Activated T-helper 2 cell treated with anti-CD3 and anti-CD28 coated beads, Interferon-gamma antibody, Interleukin-2, Interleukin-4, amounts not matched to agents 10 μg/mL and 5 μg/mL and 100 μg/mL, durations not matched to agents 14 hours and 24 hours and 36 hours (primary cell): ENCODE measurements at regions of chr11 and their contacts with region 1.

Region 1: DNA sequence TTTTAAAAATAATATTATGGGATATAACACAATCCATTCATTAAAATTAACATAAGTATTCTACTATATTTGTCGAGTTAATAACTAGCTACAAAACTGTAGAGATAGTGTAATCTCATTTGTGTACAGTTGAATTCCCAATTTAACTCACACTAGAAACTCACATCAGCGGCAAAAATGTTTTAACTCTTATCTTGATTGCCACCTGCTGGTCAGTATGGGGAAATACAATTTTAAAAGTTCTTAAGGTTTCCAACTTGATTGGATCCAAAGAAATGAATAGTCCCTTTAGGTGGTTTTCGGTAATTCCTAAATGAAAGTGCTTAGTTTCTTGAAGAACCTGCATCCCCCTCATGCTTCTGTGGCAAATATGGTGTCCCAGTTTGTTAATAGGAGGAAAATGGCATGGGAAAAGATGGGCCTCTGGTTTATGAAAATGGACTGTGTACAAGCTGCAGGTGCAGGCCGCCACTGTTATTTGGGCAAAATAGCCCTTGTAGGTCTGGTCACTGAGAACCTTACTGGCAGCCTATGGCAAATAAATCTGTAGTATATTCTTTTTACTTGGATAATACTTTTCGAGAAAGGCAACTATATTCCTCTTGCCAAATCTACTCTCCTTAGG is 33.7 kb upstream of the SLC17A6 start:
- DNase-seq: no peak
- H3K4me3 Mint-ChIP-seq: no peak overlapping the region
- H3K27ac Mint-ChIP-seq: no peak overlapping the region
- H3K4me1 Mint-ChIP-seq: no peaks in the 10 kb centered on the region
- H3K27me3 Mint-ChIP-seq: peaks cover 2% of the 10 kb centered on the region

Region 2: GRCh38 chr11:20647976-20648565 is 1656.4 kb before region 1 on chr11:
- intact Hi-C with region 1: loop called (anchors 5 kb)
- DNase-seq: no peak
- H3K4me3 Mint-ChIP-seq: no peak overlapping the region
- H3K27ac Mint-ChIP-seq: no peak overlapping the region
- H3K4me1 Mint-ChIP-seq: no peaks in the 10 kb centered on the region
- H3K27me3 Mint-ChIP-seq: no peaks in the 10 kb centered on the region

Region 3: GRCh38 chr11:22203281-22203680 is 101.2 kb before region 1 on chr11:
- intact Hi-C with region 1: no loop called
- DNase-seq: no peak
- H3K4me3 Mint-ChIP-seq: no peak overlapping the region
- H3K27ac Mint-ChIP-seq: no peak overlapping the region
- H3K4me1 Mint-ChIP-seq: no peaks in the 10 kb centered on the region
- H3K27me3 Mint-ChIP-seq: no peaks in the 10 kb centered on the region

Region 4: GRCh38 chr11:22244986-22245592 is 59.4 kb before region 1 on chr11:
- intact Hi-C with region 1: loop called (anchors 1 kb)
- DNase-seq: no peak
- H3K4me3 Mint-ChIP-seq: no peak overlapping the region
- H3K27ac Mint-ChIP-seq: no peak overlapping the region
- H3K4me1 Mint-ChIP-seq: no peaks in the 10 kb centered on the region
- H3K27me3 Mint-ChIP-seq: peaks cover 5% of the 10 kb centered on the region

Region 5: DNA sequence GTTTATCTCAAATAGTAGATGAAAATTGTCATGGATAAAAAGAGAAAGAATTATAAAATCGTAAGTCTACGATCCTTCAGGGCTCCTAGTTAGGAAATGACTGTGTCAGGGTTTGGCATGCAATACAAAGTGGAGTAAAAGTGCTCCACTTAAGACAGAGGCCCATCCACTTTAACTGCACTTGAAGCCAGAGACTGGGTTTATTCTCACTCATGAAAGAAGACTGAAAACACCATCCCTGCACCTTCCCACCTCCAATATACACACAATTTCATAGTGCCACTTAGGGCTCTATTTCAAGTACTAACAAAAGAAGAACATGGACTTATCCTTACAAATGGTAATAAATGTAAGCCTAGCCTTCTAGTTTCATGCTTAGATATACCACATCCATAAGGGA is 40.8 kb before region 1 on chr11:
- intact Hi-C with region 1: no loop called
- DNase-seq: no peak
- H3K4me3 Mint-ChIP-seq: no peak overlapping the region
- H3K27ac Mint-ChIP-seq: no peak overlapping the region
- H3K4me1 Mint-ChIP-seq: no peaks in the 10 kb centered on the region
- H3K27me3 Mint-ChIP-seq: no peaks in the 10 kb centered on the region

Region 6: DNA sequence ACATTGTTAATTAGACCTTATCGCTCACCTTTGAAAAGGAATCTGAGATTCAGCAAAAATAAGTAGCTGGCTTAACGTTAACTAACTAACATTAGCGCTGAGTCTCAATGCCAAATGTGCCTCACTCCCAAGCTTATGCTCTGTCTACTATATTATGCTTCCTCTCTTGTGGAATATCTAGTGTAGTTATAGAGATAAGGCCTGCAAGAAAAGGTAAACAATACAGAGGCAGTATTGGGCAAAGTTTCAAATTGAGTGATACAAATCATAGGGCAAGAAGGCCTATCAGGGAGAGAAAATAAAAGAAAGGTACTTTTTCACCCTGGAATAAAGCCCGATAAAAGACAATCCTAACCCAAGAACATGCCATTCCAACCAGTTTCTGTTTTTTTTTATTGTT is 27.9 kb before region 1 on chr11:
- intact Hi-C with region 1: no loop called
- DNase-seq: no peak
- H3K4me3 Mint-ChIP-seq: no peak overlapping the region
- H3K27ac Mint-ChIP-seq: no peak overlapping the region
- H3K4me1 Mint-ChIP-seq: no peaks in the 10 kb centered on the region
- H3K27me3 Mint-ChIP-seq: no peaks in the 10 kb centered on the region